Posterior vena cava (tissue), 2 donors: ENCODE measurements at regions of chr3 and their contacts with region 1.

Region 1: GRCh38 chr3:64082961-64083541 is 59.8 kb upstream of the PSMD6 start:
- DNase-seq: no peak

Region 2: GRCh38 chr3:64023187-64023848 is 59.7 kb before region 1 on chr3 and contains the start of gene PSMD6:
- intact Hi-C with region 1: no loop called
- DNase-seq: peak; percentile 97
- total RNA-seq, gene PSMD6: 53.3 to 62.7 TPM

Region 3: DNA sequence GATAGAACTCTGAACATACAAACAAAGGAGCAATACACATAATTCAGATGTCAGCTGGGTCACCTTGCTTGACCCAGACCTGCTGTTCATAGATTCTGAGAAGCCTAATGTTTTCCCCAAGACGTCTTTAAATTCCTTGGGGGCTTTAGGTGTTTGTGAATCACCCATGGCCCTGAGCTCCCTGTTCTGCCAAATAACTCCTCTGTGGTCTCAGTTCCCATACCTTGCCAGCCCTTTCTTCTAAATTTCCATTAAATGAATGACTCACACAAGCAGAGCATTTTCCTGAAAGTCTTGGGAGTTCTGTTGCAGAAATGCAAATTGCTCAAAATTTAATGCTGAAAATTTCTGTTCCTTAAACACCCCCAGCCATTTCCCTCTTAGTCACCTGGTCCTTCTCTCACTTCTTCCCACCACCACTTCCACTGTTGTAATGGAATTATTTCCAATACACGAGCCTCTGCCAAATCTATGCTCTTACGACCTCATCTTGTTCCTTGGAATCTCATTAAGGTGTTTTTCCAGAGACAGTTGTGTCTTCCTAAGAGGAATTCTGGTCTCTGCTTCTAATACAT is 26.4 kb before region 1 on chr3:
- intact Hi-C with region 1: no loop called
- DNase-seq: no peak

Region 4: GRCh38 chr3:64102147-64102546 is 19.1 kb after region 1 on chr3:
- intact Hi-C with region 1: loop called in 1 of 2 experiments (anchors 1 kb)
- DNase-seq: no peak

Region 5: DNA sequence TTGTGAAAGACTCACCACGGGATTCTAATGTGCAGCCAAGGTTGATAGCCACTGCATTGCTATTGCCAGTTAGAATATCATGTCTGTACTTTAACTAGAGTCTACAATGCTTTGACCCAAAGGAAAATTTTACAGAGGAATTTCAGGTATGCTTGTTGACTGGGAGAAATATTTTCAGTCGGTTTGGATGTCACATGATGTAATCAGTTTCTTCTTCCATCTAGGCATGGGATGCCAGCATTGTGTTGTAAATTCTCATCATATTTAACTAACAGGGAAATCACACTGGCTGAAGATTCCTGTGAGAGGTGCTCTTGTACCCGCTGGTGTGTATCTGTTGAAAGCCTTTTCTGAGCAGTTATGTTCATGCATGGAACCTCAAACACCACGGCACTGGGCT is 1113.6 kb after region 1 on chr3:
- intact Hi-C with region 1: no loop called
- DNase-seq: no peak